Activated T-helper 1 cell treated with anti-CD3 and anti-CD28 coated beads, Interleukin-12 subunit alpha, Interleukin-12 subunit beta, Interleukin-2, Interleukin-4 antibody, amounts not matched to agents 30 ng/mL and 10 ng/mL and 1 ng/mL, durations not matched to agents 14 hours and 24 hours and 36 hours (primary cell): ENCODE measurements at regions of chr10 and their contacts with region 1.

Region 1: DNA sequence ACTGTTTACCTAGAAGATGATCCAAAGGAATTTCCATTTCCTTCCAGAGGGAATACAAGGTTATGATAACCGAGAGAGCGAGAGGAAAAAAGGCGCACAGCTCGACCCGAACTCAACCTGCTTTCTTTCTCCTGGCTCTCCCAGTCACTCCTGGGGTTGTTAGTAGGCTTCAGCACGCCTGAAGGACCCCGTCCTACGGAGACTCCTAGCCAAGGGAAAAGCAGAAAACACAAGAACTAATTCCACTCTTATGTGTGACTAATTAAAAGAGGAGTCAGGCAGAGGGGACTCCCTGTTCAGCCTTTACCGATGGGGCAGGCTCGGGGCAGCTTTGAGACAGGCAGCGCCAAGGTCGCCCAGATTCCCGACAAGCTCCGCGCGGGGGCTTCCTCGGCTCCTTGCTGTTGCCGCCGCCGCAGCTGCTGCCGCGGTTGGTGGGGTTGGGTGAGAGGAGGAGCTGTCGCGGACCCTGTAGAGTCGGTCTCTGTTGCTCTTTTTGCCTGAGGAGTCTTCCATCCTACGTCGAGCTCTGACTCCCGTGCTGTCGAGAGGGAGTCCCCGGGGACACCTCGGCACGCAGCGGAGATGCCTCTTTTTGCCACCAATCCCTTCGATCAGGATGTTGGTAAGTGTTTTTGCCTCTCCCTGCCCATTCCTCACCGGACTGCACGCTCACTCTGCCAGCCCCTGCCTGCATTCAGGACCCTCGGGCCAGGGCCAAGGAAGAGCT is at the start of gene STAM:
- DNase-seq: peak; percentile 87
- H3K4me3 Mint-ChIP-seq: peak within 1 kb of the TSS; percentile 99
- H3K27ac Mint-ChIP-seq: peak within 1 kb of the TSS; percentile 100
- H3K4me1 Mint-ChIP-seq: peaks cover 55% of the 10 kb centered on the region
- H3K27me3 Mint-ChIP-seq: no peaks in the 10 kb centered on the region
- total RNA-seq, gene STAM: 23.3 and 26.8 TPM in 2 replicates

Region 2: GRCh38 chr10:17512341-17513001 is 131.4 kb before region 1 on chr10:
- intact Hi-C with region 1: loop called (anchors 5 kb)
- DNase-seq: no peak
- H3K4me3 Mint-ChIP-seq: peak overlapping the region; percentile 22
- H3K27ac Mint-ChIP-seq: peak overlapping the region; percentile 40
- H3K4me1 Mint-ChIP-seq: peaks cover 36% of the 10 kb centered on the region
- H3K27me3 Mint-ChIP-seq: peaks cover 2% of the 10 kb centered on the region

Region 3: DNA sequence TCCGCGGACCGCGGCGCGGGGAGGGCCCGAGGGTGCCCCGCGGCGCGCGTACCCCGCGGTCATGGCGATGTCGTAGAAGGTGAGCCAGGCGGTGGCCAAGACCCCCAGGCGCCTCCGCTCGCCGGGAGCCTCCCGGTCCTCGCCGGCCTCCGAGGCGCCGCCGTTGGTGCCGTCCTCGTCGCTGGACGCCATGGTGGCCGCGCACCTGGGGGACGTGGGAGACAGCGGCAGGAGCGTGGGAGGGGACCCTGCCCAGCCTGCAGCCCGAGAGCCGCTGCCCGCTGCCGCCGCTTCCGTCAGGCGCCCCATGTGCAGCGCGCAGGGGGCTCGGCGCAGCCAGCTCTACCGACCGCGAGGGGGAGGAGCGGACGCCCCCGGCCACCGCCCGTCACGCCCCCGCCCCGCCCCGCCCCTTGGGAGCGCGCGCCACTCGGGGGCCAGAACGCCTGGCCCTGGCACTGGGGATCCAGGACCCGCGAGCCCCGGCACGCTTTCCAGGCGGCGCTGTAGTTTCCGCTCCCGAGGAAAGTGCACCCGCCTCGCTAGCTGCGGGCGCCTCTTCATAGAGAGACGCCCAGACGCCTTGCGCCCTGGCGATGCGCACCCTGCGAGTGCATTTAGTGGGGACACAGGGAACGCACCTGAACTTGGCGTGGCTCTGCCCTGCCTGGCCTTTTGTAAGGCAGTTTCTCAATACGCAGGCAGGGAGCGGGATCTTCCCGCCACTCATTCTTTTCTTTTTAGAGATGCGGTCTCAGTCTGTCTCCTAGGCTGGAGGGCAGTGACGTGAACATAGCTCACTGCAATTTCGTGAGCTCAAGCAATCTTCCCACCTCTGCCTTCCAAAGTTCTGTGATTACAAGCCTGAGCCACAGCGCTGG is 26.6 kb before region 1 on chr10 and contains the start of gene HACD1:
- intact Hi-C with region 1: loop called (anchors 1 kb)
- DNase-seq: peak; percentile 29
- H3K4me3 Mint-ChIP-seq: peak within 1 kb of the TSS; percentile 86
- H3K27ac Mint-ChIP-seq: peak within 1 kb of the TSS; percentile 68
- H3K4me1 Mint-ChIP-seq: peaks cover 6% of the 10 kb centered on the region
- H3K27me3 Mint-ChIP-seq: peaks cover 43% of the 10 kb centered on the region
- total RNA-seq, gene HACD1: 0.80 and 1.5 TPM in 2 replicates

Region 4: DNA sequence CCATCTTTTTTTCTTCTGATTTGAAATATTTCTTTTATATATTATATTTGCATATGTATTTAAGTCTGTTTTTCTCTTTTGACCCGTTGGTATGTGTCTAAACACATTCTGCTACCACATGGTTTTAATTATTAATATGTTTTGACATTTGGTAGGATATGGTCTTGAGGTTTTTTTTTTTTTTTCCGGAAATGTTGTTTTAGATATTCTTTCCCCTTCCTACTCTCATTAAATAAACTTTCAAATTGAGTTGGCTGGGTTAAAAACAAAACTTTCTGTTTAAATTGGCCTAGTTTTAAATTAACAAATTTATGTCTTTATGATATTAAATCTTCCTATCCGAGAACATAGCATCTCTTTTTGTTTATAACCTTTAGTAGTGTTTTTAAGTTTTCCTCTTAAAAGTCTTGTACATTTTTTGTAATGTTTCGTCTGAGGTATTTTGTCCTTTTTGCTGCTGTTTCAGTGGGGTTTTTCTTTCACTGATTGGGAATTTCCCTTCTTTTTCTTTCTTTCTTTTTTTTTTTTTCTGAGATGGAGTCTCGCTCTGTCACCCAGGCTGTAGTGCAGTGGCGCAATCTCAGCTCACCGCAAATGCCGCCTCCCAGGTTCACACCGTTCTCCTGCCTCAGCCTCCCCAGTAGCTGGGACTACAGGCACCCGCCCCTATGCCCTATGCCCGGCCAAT is 25.4 kb after region 1 on chr10:
- intact Hi-C with region 1: loop called (anchors 1 kb)
- DNase-seq: no peak
- H3K4me3 Mint-ChIP-seq: peak overlapping the region; percentile 74
- H3K27ac Mint-ChIP-seq: peak overlapping the region; percentile 89
- H3K4me1 Mint-ChIP-seq: peaks cover 60% of the 10 kb centered on the region
- H3K27me3 Mint-ChIP-seq: no peaks in the 10 kb centered on the region

Region 5: DNA sequence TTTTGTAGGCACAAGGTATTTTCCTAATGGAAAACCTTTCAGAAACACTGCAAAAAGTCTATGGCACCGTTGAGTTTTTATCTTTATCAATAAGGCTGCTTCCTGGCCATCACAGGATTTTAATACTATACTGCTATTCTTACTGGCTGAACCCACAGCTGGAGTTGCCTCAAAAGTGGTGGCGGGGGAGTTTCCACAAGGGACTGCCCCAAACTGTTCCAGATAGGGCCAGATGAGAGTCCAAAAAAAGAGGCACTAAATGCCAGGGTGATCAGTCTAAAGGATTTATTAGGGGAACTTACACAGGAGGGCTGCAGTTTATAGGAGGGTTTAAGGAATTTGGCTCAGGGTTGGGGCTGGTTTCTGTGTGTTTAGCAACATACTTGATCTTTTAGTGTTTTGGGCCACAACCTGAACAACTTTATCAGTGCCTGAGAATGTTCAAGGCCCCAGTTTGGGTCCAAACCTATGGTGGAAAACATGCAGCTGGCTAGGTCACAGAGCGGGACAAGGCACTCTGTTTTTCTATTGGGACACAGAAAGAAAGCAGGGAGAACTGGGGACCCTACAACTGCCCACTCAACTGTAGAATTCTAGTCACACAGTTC is 41.4 kb after region 1 on chr10:
- intact Hi-C with region 1: loop called (anchors 1 kb)
- DNase-seq: no peak
- H3K4me3 Mint-ChIP-seq: no peak overlapping the region
- H3K27ac Mint-ChIP-seq: peak overlapping the region; percentile 71
- H3K4me1 Mint-ChIP-seq: peaks cover 34% of the 10 kb centered on the region
- H3K27me3 Mint-ChIP-seq: no peaks in the 10 kb centered on the region

Region 6: GRCh38 chr10:17782921-17783665 is 139.2 kb after region 1 on chr10:
- intact Hi-C with region 1: no loop called
- DNase-seq: no peak
- H3K4me3 Mint-ChIP-seq: no peak overlapping the region
- H3K27ac Mint-ChIP-seq: no peak overlapping the region
- H3K4me1 Mint-ChIP-seq: no peaks in the 10 kb centered on the region
- H3K27me3 Mint-ChIP-seq: peaks cover 5% of the 10 kb centered on the region

Region 7: DNA sequence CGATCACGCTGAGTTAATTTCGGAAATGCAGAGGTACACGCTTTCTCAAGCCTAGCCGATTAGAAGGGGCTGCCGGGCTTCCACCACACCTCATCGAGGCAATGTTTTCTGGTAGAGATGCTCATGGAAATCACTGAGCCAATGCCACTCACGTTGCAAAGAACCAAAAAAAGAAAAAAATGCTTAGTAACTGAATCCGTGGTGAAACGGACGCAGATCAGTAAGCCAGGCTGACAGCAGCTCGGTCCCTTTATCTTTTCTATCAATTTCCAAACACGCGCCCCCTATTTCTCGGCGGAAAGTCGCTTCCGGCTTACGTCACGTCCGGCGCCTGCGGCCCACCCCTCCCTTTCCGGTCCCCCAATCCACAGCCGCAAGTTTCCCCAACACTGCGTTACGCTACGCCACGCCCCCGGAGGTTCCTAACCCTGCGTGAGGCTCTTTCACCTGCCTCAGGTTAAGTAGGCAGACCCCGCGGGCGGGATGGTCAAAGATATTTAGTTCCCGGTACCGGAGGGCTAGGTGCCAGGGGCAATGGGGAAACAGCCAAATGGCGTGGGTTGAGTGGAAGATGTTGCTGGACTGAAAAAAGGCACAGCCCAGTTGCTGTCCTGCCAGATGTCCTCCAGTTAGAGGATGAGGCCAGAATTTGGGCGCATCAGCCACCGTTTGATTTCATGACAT is 1007.5 kb after region 1 on chr10 and contains the start of gene NSUN6:
- intact Hi-C with region 1: loop called (anchors 5 kb)
- DNase-seq: peak; percentile 91
- H3K4me3 Mint-ChIP-seq: peak within 1 kb of the TSS; percentile 96
- H3K27ac Mint-ChIP-seq: peak within 1 kb of the TSS; percentile 96
- H3K4me1 Mint-ChIP-seq: peaks cover 48% of the 10 kb centered on the region
- H3K27me3 Mint-ChIP-seq: no peaks in the 10 kb centered on the region
- total RNA-seq, gene NSUN6: 12.2 and 12.8 TPM in 2 replicates